Activated CD8-positive, alpha-beta T cell treated with anti-CD3 and anti-CD28 coated beads, Interleukin-2, amount 10 ng/mL, durations not matched to agents 7 days and 5 days (primary cell): ENCODE measurements at regions of chr7 and their contacts with region 1.

Region 1: GRCh38 chr7:1059200-1060091 is 15.1 kb downstream of the GPR146 start:
- DNase-seq: no peak
- ATAC-seq: peak; percentile 44
- H3K4me3 Mint-ChIP-seq: no peak overlapping the region
- H3K27ac Mint-ChIP-seq: no peak overlapping the region
- H3K4me1 Mint-ChIP-seq: peaks cover 21% of the 10 kb centered on the region
- H3K27me3 Mint-ChIP-seq: no peaks in the 10 kb centered on the region

Region 2: DNA sequence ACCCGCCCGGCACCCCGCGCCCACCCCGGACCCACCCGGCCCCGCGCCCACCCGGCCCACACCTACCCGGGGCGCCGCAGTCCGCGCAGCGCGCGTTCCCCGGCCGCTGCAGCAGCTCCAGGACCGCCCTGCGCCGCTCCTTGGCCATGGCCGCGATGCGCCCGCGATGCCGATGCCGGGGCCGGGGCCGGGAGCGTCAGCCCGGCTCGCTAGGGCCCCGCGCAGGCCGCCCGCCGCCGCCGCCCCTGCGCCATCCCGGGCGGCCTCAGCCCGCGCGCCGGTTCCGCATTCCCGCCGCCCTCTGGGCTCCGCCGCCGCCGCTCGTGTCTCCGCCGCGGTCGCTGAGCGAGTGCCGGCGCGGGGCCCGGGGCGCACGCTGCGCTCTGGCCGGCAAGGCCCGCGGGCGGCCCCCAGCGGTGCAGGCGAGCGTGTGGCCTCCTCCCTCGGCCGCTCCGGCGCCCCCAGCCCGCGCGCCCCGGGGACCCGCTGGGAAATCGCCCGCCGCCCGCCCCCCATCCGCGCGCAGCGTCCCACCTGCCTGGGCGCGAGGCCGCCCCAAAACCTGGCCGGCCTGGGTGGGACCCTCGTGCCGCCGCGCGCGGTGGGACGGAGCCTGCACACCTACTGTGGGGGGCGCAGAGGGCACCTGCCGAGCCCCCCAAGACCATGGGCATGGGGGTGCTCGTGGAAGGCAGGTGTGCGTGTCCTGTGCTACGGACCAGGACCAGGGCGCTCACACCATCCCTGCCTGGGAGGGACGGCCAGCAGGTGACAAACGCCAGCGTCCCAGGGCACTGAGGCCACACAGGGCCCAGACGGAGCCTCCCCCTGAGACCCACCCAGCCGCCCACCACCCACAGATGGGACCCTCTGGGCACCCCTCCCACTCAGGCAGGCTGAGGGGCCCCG is 104.9 kb before region 1 on chr7 and contains the start of gene ADAP1:
- CTCF ChIA-PET with region 1: no interaction called
- POLR2A ChIA-PET with region 1: no interaction called
- DNase-seq: peak; percentile 54
- ATAC-seq: peak; percentile 79
- H3K4me3 Mint-ChIP-seq: peak within 1 kb of the TSS; percentile 70
- H3K27ac Mint-ChIP-seq: no peak within 1 kb of the TSS
- H3K4me1 Mint-ChIP-seq: peaks cover 10% of the 10 kb centered on the region
- H3K27me3 Mint-ChIP-seq: no peaks in the 10 kb centered on the region
- total RNA-seq, gene ADAP1: 24.2 to 28.6 TPM

Region 3: DNA sequence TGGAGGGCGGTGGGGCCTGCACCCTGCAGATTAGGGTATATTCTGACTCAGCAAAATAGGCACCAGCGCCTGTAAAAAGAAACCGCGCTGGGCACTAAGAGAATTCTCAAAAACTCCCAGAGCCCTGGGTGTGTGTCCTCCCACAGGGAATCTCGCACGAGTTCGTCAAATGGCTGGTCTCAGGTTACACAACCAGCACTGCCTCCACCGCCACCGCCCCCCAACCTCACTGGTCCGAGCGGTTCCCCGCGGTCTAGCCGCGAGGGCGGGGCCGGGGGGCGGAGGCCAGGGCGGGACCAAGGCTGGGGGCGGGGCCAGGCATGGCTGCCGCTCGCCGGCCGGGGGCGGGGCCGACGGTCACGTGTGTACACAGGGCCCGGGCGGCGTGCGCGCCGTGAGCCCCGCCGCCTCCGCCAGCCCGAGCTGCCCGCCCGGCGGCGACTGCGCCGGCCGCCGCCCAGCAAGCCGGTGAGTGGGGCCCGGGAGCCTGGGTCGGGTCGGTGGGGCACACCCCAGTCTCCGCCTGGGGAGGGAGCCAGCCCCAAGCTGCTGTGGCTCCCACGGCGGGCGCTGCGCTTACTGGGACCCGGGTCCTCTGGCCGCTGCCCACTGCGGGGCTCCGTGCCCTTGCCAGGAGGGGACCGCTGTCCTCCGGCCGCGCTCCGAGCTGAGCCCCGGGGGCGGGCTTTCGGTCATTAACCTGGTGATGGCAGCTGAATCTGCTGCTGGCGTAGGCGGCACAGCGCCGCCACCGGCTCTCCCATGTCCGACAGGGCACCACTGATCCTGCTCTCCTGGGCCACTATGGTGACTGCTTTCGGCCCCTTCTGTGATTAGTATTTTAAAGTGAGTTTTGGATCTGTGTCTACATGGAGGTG is 15.0 kb before region 1 on chr7 and contains the start of gene GPR146:
- CTCF ChIA-PET with region 1: interaction called, 29 read pairs
- POLR2A ChIA-PET with region 1: no interaction called
- DNase-seq: peak; percentile 92
- ATAC-seq: peak; percentile 94
- H3K4me3 Mint-ChIP-seq: peak within 1 kb of the TSS; percentile 77
- H3K27ac Mint-ChIP-seq: peak within 1 kb of the TSS; percentile 78
- H3K4me1 Mint-ChIP-seq: peaks cover 69% of the 10 kb centered on the region
- H3K27me3 Mint-ChIP-seq: no peaks in the 10 kb centered on the region
- total RNA-seq, gene GPR146: 2.7 to 3.1 TPM

Region 4: GRCh38 chr7:1105189-1105588 is 45.7 kb after region 1 on chr7:
- CTCF ChIA-PET with region 1: no interaction called
- POLR2A ChIA-PET with region 1: no interaction called
- DNase-seq: no peak
- ATAC-seq: no peak
- H3K4me3 Mint-ChIP-seq: no peak overlapping the region
- H3K27ac Mint-ChIP-seq: no peak overlapping the region
- H3K4me1 Mint-ChIP-seq: peaks cover 27% of the 10 kb centered on the region
- H3K27me3 Mint-ChIP-seq: no peaks in the 10 kb centered on the region